ENCODE measurements at regions of chr14 and their contacts with region 1.

Region 1: DNA sequence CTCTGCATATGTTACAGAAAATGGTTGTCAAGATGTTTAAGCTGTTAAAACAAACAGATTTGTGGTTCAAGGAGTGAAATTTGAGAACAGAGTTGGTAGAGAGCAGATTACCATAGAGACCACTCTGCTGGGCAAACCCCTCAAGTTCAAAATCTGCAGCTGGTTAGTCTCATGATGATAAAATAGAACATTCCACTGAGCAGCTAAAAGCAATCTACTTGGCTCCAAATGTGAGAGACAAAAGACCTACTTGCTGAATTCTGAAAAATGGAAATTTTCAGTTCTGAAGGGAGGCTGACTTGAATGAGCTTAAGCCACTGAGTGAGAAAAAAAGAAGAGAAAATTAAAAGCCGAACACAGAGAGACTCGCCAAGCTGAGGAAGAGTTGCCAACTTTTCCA is 519.3 kb downstream of the NOVA1 start:
- DNase-seq: no peak
- H3K4me3 ChIP-seq: no peak overlapping the region
- H3K27ac ChIP-seq: no peak overlapping the region
- H3K4me1 ChIP-seq: no peaks in the 10 kb centered on the region
- H3K27me3 ChIP-seq: no peaks in the 10 kb centered on the region
- CTCF ChIP-seq: no peak

Region 2: GRCh38 chr14:26143057-26143456 is 64.5 kb after region 1 on chr14:
- CTCF ChIA-PET with region 1: no interaction called
- POLR2A ChIA-PET with region 1: interaction called, 14 read pairs
- intact Hi-C with region 1: no loop called
- DNase-seq: no peak
- H3K4me3 ChIP-seq: no peak overlapping the region
- H3K27ac ChIP-seq: no peak overlapping the region
- H3K4me1 ChIP-seq: peaks cover 16% of the 10 kb centered on the region
- H3K27me3 ChIP-seq: no peaks in the 10 kb centered on the region
- CTCF ChIP-seq: no peak